Activated CD8-positive, alpha-beta T cell treated with anti-CD3 and anti-CD28 coated beads for 36 hours (primary cell): ENCODE measurements at regions of chr3 and their contacts with region 1.

Region 1: GRCh38 chr3:151282921-151283320 is 4.6 kb upstream of the P2RY14 start:
- DNase-seq: no peak
- ATAC-seq: peak; percentile 57
- H3K4me3 Mint-ChIP-seq: no peak overlapping the region
- H3K27ac Mint-ChIP-seq: no peak overlapping the region
- H3K4me1 Mint-ChIP-seq: peaks cover 39% of the 10 kb centered on the region
- H3K27me3 Mint-ChIP-seq: no peaks in the 10 kb centered on the region
- CTCF ChIP-seq: peak; percentile 82

Region 2: GRCh38 chr3:151210676-151211381 is 72.1 kb before region 1 on chr3:
- CTCF ChIA-PET with region 1: interaction called, 11 read pairs
- POLR2A ChIA-PET with region 1: interaction called, 4 read pairs
- intact Hi-C with region 1: no loop called
- DNase-seq: no peak
- ATAC-seq: peak; percentile 50
- H3K4me3 Mint-ChIP-seq: peak overlapping the region; percentile 63
- H3K27ac Mint-ChIP-seq: peak overlapping the region; percentile 85
- H3K4me1 Mint-ChIP-seq: peaks cover 51% of the 10 kb centered on the region
- H3K27me3 Mint-ChIP-seq: no peaks in the 10 kb centered on the region
- CTCF ChIP-seq: peak; percentile 39

Region 3: DNA sequence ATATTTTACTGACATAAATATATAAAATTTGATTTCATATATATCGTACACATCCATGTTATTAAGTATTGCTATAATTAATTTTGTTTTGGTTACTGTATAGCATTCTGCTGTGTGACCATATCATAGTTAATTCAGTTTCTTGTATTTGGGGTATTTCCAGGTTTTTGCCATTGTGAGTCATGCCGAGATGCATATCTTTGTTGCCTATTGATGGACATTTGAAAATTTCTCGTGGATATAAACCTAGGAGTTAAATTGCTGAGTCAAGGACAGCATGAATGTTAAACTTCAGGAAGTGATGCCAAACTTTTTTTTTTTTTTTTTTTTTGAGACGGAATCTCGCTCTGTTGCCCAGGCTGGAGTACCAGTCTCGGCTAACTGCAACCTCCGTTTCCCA is 46.2 kb before region 1 on chr3:
- CTCF ChIA-PET with region 1: interaction called, 14 read pairs
- POLR2A ChIA-PET with region 1: no interaction called
- intact Hi-C with region 1: no loop called
- DNase-seq: no peak
- ATAC-seq: no peak
- H3K4me3 Mint-ChIP-seq: no peak overlapping the region
- H3K27ac Mint-ChIP-seq: no peak overlapping the region
- H3K4me1 Mint-ChIP-seq: no peaks in the 10 kb centered on the region
- H3K27me3 Mint-ChIP-seq: no peaks in the 10 kb centered on the region
- CTCF ChIP-seq: no peak

Region 4: DNA sequence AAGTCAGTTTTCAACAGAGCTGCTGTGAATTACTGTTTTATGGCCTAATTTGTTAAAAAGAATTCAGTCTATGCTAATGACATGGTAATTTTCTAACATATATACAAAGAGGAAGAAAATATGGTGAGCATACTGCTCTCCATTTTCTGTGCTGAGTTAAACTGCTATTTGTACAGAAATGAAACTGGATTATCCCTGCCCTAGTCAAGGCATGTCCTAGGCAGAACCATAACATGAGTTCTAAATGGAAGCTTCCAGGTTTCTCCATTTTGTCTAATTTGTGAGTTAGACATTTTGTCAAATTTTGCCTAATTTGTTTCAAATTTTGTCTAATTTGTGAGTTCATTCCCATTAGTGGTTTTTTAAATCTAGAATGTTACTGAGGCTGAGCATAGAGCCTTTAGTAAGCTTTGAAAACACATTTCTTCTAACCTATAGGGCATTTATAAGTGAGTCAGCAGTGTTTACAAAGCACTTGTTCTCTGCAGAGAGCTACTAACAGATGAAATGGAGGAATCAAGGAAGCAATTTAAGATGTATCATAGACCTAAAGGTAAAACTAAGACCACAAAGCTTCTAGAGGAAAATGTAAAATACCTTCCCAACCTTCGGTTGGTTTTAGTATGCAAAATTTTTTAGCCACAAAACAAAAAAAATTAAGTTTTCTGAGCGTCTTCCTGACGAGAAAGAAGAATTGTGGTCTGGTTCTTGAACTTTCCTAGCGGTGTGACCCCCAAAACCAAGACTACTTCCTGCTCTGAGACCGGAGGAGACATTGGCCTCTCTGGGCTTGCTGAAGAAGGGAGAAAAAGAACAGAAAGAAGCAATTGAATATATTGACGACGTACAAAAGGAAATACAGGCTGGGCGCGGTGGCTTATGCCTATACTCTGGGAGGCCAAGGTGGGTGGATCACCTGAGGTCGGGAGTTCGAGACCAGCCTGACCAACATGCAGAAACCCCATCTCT is 14.4 kb before region 1 on chr3:
- CTCF ChIA-PET with region 1: interaction called, 17 read pairs
- POLR2A ChIA-PET with region 1: interaction called, 3 read pairs
- intact Hi-C with region 1: no loop called
- DNase-seq: peak; percentile 83
- ATAC-seq: peak; percentile 89
- H3K4me3 Mint-ChIP-seq: peak overlapping the region; percentile 54
- H3K27ac Mint-ChIP-seq: peak overlapping the region; percentile 85
- H3K4me1 Mint-ChIP-seq: peaks cover 27% of the 10 kb centered on the region
- H3K27me3 Mint-ChIP-seq: no peaks in the 10 kb centered on the region
- CTCF ChIP-seq: no peak

Region 5: DNA sequence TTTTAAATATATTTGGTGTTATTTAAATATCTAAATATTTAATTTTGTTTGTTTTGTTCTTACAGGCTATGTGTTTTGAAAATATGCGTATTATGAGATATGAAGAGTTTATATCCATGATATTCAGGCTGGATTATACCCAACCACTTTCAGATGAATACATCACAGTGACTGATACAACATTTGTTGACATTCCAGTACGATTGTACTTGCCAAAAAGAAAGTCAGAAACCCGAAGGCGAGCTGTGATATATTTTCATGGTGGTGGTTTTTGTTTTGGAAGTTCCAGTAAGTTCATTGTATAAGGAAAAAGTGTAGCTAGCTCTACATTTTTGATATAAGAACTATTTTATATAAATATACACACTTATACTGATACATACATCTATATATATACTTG is 457.7 kb after region 1 on chr3:
- CTCF ChIA-PET with region 1: no interaction called
- POLR2A ChIA-PET with region 1: no interaction called
- intact Hi-C with region 1: no loop called
- DNase-seq: no peak
- ATAC-seq: no peak
- H3K4me3 Mint-ChIP-seq: no peak overlapping the region
- H3K27ac Mint-ChIP-seq: no peak overlapping the region
- H3K4me1 Mint-ChIP-seq: no peaks in the 10 kb centered on the region
- H3K27me3 Mint-ChIP-seq: no peaks in the 10 kb centered on the region
- CTCF ChIP-seq: no peak